Posterior cingulate gyrus (tissue), 11 donors: ENCODE measurements at regions of chr20 and their contacts with region 1.

Region 1: GRCh38 chr20:478949-479429 is 16.7 kb upstream of the TBC1D20 start:
- DNase-seq: no peak

Region 2: GRCh38 chr20:431012-431904 is 47.7 kb before region 1 on chr20:
- intact Hi-C with region 1: loop called (anchors 2 kb)
- DNase-seq: peak; percentile 69 to 97 (median 84)